Posterior cingulate gyrus (tissue), 11 donors: ENCODE measurements at regions of chr1 and their contacts with region 1.

Region 1: DNA sequence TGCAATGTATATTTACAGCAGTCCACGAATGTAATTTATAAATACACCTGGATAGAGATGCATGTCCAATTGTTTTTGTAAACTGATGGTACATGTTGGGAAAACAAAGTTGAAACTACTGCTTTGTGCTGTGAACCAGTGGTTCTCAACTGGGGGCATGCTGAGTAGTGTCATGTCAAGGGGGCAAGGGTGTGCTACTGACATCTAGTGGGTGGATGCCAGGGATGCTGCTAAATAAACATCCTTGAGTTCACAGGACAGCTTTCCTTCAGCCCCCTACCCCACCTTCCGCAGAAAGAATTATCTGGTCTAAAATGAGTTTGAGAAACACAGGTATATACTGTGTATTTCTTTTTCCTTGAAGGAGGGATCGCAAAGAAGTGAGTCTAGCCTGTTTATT is 95.9 kb downstream of the RASAL2 start:
- DNase-seq: peak in 3 of 10 donors; percentile 5 to 41 (median 24)

Region 2: DNA sequence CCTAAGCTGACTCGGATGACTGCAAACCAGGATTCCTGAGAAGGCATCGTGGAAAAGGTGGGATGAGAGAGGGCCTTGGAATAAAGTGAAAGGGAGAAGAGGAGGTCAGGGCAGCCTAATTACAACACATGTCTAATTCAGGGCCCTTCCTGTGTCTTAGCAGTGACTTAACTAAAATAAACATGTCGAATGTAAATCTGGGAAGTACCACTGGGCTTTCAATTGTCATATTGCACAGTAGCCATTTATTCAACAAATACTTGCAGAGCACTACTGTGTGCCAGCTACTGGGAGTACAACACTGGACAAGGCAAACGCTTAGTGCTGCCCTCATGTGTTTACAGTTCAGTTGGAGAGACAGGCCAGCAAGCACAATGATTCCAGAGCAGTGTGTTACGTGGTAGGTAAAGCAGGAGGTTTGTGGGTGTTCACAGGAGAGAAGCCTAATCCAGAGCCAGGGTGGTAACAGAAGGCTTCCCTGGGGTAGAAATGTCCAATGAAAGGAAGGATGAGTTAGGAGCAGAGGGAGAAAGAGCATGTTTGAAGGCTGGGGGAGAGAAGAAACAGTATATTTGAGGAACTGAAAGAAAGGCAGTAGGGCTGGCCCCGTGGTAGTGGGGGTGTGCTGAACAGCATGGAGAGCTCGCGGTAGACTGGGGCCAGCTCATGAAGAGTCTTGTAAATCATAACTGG is 133.9 kb before region 1 on chr1:
- intact Hi-C with region 1: loop called (anchors 10 kb)
- DNase-seq: peak in 1 of 10 donors; percentile 75